ENCODE measurements at regions of chr10 and their contacts with region 1.

Region 1: GRCh38 chr10:117005027-117005526 is at the start of gene SHTN1:
- DNase-seq: peak; percentile 84
- ATAC-seq: peak; percentile 89
- H3K4me3 ChIP-seq: peak within 1 kb of the TSS; percentile 85 to 89
- H3K27ac ChIP-seq: peak within 1 kb of the TSS; percentile 92
- H3K4me1 ChIP-seq: peaks cover 25 to 36% of the 10 kb centered on the region in 2 experiments
- H3K27me3 ChIP-seq: no peaks in the 10 kb centered on the region
- CTCF ChIP-seq: no peak
- POLR2A ChIP-seq: peak; percentile 56
- RAD21 ChIP-seq: no peak
- total RNA-seq, gene SHTN1: 64.0 TPM

Region 2: GRCh38 chr10:116910910-116911309 is 94.2 kb before region 1 on chr10:
- CTCF ChIA-PET with region 1: no interaction called
- POLR2A ChIA-PET with region 1: no interaction called
- RAD21 ChIA-PET with region 1: no interaction called
- intact Hi-C with region 1: no loop called
- DNase-seq: no peak
- ATAC-seq: no peak
- H3K4me3 ChIP-seq: no peak overlapping the region
- H3K27ac ChIP-seq: no peak overlapping the region
- H3K4me1 ChIP-seq: no peaks in the 10 kb centered on the region
- H3K27me3 ChIP-seq: no peaks in the 10 kb centered on the region
- CTCF ChIP-seq: no peak
- POLR2A ChIP-seq: no peak
- RAD21 ChIP-seq: no peak

Region 3: GRCh38 chr10:116925056-116925455 is 80.0 kb before region 1 on chr10:
- CTCF ChIA-PET with region 1: no interaction called
- POLR2A ChIA-PET with region 1: no interaction called
- RAD21 ChIA-PET with region 1: no interaction called
- intact Hi-C with region 1: no loop called
- DNase-seq: no peak
- ATAC-seq: no peak
- H3K4me3 ChIP-seq: no peak overlapping the region
- H3K27ac ChIP-seq: no peak overlapping the region
- H3K4me1 ChIP-seq: 0 out of 4 replicates have a peak, but pooled peaks cover 0 to 2% of the 10 kb centered on the region in 2 experiments
- H3K27me3 ChIP-seq: no peaks in the 10 kb centered on the region
- CTCF ChIP-seq: no peak
- POLR2A ChIP-seq: no peak
- RAD21 ChIP-seq: no peak

Region 4: GRCh38 chr10:116947842-116948529 is 57.1 kb before region 1 on chr10:
- CTCF ChIA-PET with region 1: no interaction called
- POLR2A ChIA-PET with region 1: interaction called, 6 read pairs
- RAD21 ChIA-PET with region 1: no interaction called
- intact Hi-C with region 1: loop called (anchors 1 kb)
- DNase-seq: peak; percentile 59
- ATAC-seq: peak; percentile 64
- H3K4me3 ChIP-seq: peak overlapping the region in 1 of 2 experiments; percentile 17; a peak in 1 of 4 replicates
- H3K27ac ChIP-seq: peak overlapping the region; percentile 43
- H3K4me1 ChIP-seq: peaks cover 22 to 23% of the 10 kb centered on the region in 2 experiments
- H3K27me3 ChIP-seq: no peaks in the 10 kb centered on the region
- CTCF ChIP-seq: no peak
- POLR2A ChIP-seq: no peak
- RAD21 ChIP-seq: no peak

Measured in HCT116 (cell line).